Sciatic nerve (tissue), 2 donors: ENCODE measurements at regions of chr12 and their contacts with region 1.

Region 1: DNA sequence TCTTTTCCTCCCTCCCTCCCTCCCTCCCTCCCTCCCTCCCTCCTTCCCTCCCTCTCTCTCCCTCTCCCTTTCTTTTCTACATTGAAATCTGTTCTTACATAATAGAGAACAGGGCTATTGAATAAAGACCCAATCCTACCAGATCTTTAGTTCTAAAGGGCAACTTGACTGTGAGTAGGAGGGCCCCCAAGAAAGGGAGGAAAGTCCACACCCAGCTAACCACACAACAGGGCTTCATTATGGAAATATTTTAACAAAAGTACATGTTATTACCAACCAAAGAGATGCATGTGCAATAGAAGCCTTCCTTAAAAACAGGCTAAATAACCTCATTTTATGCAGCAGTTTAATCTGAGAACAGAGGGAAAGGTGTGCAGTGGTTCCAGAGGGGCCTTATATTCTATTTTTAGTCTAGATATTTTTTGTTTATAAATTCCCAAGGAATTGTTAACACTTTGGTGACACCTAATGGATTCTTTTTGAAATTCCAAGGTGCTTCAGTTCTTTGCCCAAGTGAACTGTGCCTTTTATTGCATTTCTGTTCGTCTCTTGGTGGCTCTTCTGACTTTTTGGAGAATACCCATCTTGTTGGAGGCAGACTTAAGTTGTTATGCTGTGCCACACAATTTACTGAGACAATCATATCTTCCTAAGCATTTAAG is 63.0 kb downstream of the GNS start:
- DNase-seq: no peak
- ATAC-seq: peak; percentile 28

Region 2: GRCh38 chr12:64551698-64552097 is 144.5 kb before region 1 on chr12:
- intact Hi-C with region 1: loop called (anchors 5 kb)
- DNase-seq: no peak
- ATAC-seq: peak; percentile 77

Region 3: GRCh38 chr12:64669270-64669842 is 26.9 kb before region 1 on chr12:
- intact Hi-C with region 1: no loop called
- DNase-seq: no peak
- ATAC-seq: peak; percentile 47

Region 4: DNA sequence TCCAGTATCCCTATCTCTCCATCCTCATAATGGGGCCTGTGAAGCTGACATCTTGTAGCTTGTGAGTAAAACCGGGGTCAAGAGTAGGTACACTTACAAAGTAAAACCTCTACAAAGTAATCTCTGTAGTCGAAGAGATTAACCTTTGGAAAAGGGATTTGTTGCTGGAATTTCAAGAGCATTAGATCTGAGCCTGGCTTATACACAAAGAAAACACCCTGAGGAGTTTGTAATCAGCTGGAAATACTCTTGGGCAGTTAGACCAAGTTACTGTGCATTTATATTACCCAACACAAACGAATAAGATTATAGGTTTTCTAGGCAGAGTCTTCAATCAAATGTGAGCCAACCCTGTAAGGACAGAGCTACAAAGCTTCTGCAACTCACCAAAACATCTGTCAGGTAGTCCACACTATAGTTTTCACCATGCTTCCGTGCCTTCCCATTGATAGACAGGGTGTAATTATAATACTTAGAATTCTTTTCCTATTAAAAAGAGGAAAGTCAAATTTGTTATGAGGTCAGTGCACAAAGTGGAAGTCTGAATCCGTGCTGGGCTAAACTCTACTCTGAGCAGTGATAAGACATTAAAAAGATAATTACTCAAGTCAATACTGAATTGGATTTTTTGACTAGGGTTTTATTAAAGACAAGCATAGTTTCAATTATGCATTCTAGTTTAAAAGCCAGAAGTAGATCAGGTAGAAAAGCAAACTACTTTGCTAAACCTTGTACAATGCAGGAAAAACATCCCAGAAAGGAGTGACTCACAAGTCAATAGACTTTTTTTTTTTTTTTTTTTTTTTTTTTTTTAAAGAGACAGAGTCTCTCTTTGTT is 48.4 kb after region 1 on chr12:
- intact Hi-C with region 1: no loop called
- DNase-seq: no peak
- ATAC-seq: no peak